ENCODE measurements at regions of chr3 and their contacts with region 1.

Region 1: DNA sequence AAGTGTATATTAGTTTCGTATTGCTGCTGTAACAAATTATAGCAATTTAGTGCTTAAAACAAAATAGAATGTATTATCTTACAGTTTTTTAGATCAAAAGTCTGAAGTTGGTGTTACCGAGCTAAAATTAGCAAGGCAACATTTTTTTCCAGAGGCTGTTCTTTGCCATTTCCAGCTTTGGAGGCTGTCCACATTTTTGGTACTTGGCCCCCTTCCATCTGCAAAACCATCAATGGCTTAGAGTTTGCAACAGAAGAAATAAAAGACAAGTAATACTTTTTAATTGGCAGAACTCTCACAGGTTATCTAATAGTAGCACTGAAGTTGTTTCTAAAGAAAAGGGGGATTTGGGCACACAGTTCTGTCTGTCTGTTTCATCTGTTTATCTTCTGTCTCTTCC is 1248.5 kb downstream of the ROBO1 start:
- DNase-seq: no peak
- H3K4me3 ChIP-seq: no peak overlapping the region
- H3K27ac ChIP-seq: no peak overlapping the region
- H3K4me1 ChIP-seq: no peaks in the 10 kb centered on the region
- H3K27me3 ChIP-seq: no peaks in the 10 kb centered on the region
- CTCF ChIP-seq: no peak

Region 2: GRCh38 chr3:78343221-78343620 is 176.1 kb before region 1 on chr3:
- CTCF ChIA-PET with region 1: no interaction called
- dilution Hi-C with region 1: no loop called
- in situ Hi-C with region 1: no loop called
- intact Hi-C with region 1: no loop called
- DNase-seq: no peak
- H3K4me3 ChIP-seq: no peak overlapping the region
- H3K27ac ChIP-seq: no peak overlapping the region
- H3K4me1 ChIP-seq: no peaks in the 10 kb centered on the region
- H3K27me3 ChIP-seq: no peaks in the 10 kb centered on the region
- CTCF ChIP-seq: no peak

Region 3: DNA sequence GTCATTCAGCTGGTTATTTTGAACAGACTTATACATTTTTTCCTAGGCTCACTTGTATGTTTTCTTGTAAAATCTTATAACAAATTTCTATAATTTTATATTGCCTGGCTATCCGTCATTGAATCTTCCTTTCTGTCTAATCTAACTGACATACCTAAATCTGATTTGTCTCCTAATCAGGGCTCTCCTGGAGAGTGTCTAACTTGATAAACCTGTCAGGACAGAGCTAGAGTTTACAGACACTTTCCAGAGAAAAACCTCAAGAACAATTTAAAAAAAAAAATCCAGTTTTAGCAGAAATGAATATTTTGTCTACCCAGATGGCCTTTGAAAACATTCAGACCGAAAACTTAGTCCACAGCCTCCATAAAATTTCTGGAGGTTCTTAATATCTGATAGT is 57.3 kb before region 1 on chr3:
- CTCF ChIA-PET with region 1: no interaction called
- dilution Hi-C with region 1: loop called (anchors 5 kb)
- in situ Hi-C with region 1: no loop called
- intact Hi-C with region 1: no loop called
- DNase-seq: no peak
- H3K4me3 ChIP-seq: no peak overlapping the region
- H3K27ac ChIP-seq: no peak overlapping the region
- H3K4me1 ChIP-seq: no peaks in the 10 kb centered on the region
- H3K27me3 ChIP-seq: no peaks in the 10 kb centered on the region
- CTCF ChIP-seq: no peak